Activated naive CD4-positive, alpha-beta T cell treated with anti-CD3 and anti-CD28 coated beads, Interleukin-2, amount 10 ng/mL, durations not matched to agents 7 days and 5 days (primary cell): ENCODE measurements at regions of chr2 and their contacts with region 1.

Region 1: GRCh38 chr2:85066874-85067351 is 66.3 kb upstream of the TCF7L1 start:
- DNase-seq: peak; percentile 62
- H3K4me3 Mint-ChIP-seq: no peak overlapping the region
- H3K27ac Mint-ChIP-seq: no peak overlapping the region
- H3K4me1 Mint-ChIP-seq: peaks cover 3% of the 10 kb centered on the region
- H3K27me3 Mint-ChIP-seq: peaks cover 61% of the 10 kb centered on the region

Region 2: GRCh38 chr2:85053802-85054201 is 13.1 kb before region 1 on chr2:
- CTCF ChIA-PET with region 1: interaction called, 11 read pairs
- DNase-seq: no peak
- H3K4me3 Mint-ChIP-seq: no peak overlapping the region
- H3K27ac Mint-ChIP-seq: no peak overlapping the region
- H3K4me1 Mint-ChIP-seq: peaks cover 49% of the 10 kb centered on the region
- H3K27me3 Mint-ChIP-seq: no peaks in the 10 kb centered on the region

Region 3: GRCh38 chr2:85282914-85283313 is 216.0 kb after region 1 on chr2:
- CTCF ChIA-PET with region 1: interaction called, 44 read pairs
- DNase-seq: no peak
- H3K4me3 Mint-ChIP-seq: no peak overlapping the region
- H3K27ac Mint-ChIP-seq: no peak overlapping the region
- H3K4me1 Mint-ChIP-seq: peaks cover 17% of the 10 kb centered on the region
- H3K27me3 Mint-ChIP-seq: peaks cover 8% of the 10 kb centered on the region